ENCODE measurements at regions of chr2 and their contacts with region 1.

Region 1: DNA sequence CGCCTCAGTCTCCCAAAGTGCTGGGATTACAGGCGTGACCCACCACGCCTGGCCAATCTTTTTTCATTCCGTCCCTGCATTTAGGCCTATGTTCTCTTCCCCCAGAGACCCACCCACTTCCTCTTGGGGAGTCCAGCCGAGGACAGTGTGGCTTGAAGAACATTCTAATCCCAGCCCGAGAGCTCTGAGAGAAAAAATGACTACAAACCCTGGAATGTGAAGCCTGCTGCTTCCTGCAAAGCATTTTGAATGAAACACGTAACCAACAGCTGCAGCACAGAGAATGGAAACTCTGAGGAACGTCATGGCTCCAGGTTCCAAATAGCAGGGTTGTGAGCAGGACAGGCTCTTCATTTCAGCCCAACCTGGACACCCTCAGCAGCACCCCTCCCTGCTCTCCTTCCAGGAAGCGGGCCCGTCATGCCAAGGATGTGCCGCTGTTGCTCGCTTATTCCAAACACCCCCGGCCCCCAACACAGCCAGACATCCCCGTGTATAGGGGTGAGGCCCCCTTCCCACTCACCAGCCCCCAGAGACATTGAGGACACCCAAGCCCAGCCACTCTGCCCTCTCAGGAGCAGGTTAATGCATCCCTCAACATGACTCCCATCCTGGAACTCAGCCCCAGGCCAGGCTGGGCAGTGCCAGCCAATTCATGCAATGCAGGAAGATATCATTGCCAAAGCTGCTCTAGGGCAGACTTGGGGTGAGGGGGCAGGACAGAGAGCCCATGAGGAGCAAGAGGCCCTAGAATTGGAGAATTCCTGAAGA is 139.8 kb downstream of the ZFP36L2 start:
- DNase-seq: peak; percentile 80 to 96
- H3K4me3 ChIP-seq: no peak overlapping the region
- H3K27ac ChIP-seq: peak overlapping the region; percentile 96 to 97
- H3K4me1 ChIP-seq: peaks cover 33 to 63% of the 10 kb centered on the region in 2 donors
- H3K27me3 ChIP-seq: no peaks in the 10 kb centered on the region
- CTCF ChIP-seq: no peak

Region 2: GRCh38 chr2:42105330-42106256 is 981.0 kb before region 1 on chr2:
- intact Hi-C with region 1: no loop called
- DNase-seq: peak in 1 of 2 donors; percentile 80
- H3K4me3 ChIP-seq: no peak overlapping the region
- H3K27ac ChIP-seq: peak overlapping the region in 1 of 2 donors; percentile 12
- H3K4me1 ChIP-seq: peaks cover 0 to 28% of the 10 kb centered on the region in 2 donors
- H3K27me3 ChIP-seq: no peaks in the 10 kb centered on the region
- CTCF ChIP-seq: no peak

Region 3: GRCh38 chr2:42931146-42931817 is 155.4 kb before region 1 on chr2:
- intact Hi-C with region 1: no loop called
- DNase-seq: no peak
- H3K4me3 ChIP-seq: no peak overlapping the region
- H3K27ac ChIP-seq: peak overlapping the region; percentile 70 to 97
- H3K4me1 ChIP-seq: peaks cover 20 to 76% of the 10 kb centered on the region in 2 donors
- H3K27me3 ChIP-seq: no peaks in the 10 kb centered on the region
- CTCF ChIP-seq: peak in 2 of 3 experiments; percentile 21 to 26

Region 4: DNA sequence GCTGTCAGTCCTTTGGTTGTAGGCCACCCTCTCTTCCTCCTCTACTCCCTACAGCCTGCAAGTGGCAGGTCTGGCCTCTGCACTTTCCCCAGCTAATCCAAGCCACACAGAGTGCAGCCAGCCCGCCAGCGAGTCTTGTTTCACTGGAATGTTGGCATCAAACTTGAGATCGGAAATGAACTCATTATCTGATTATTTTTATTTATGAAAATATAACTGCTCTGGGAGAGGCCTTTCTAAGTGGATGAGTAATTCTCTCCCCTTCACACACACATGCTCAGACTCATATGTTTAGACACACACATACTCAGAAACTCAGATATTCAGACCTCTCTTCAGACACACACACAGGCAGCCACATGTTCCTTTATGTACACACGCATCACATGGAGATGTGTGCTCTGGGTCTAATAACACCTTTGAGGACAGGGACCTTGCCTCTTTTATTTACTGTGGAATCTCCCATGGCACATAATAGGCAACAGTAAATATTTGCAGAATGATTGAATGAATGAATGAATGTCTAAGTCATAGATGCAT is 11.5 kb before region 1 on chr2:
- intact Hi-C with region 1: loop called (anchors 1 kb)
- DNase-seq: peak; percentile 71 to 95
- H3K4me3 ChIP-seq: no peak overlapping the region
- H3K27ac ChIP-seq: peak overlapping the region; percentile 90 to 99
- H3K4me1 ChIP-seq: peaks cover 28 to 63% of the 10 kb centered on the region in 2 donors
- H3K27me3 ChIP-seq: no peaks in the 10 kb centered on the region
- CTCF ChIP-seq: peak in 2 of 3 experiments; percentile 12 to 25

Region 5: DNA sequence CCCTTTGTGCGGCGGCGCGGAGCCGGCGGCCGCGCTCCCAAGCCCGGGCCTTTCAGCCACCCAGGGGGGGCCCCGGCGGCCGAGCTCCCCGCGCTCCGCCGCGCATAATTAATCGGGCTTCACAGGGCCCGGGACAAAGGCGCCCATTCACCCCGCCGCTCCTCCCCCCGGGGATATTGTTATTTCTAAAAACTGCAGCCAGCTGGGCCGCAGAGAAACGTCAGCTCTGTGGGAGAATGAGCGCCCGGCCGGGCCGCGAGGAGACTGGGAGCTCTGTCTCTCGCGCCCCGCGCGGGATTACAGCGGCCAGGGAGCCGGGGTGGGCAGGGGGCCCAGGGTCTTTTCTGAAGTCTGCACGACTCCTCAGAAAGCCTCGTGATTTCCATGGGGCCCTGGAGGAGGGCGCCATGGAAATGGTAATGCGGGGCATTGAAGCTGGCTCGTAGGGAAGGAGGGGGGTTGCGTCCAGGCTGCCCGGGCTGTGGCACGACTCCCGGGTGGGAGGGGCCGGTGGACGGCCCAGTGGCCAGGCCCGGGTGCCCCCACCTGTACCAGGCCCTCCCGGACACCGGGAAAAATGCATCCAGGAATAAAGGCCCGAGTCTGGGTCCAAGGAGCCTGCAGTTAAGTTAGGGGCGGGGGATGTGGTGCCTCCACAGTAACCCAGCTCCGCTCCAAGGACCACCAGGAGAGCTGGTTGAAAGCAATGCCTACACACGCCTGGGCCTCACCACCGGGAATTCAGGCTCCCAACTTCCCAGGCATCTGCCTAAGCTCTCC is 14.4 kb after region 1 on chr2:
- intact Hi-C with region 1: loop called (anchors 2 kb)
- DNase-seq: no peak
- H3K4me3 ChIP-seq: peak overlapping the region; percentile 44 to 65
- H3K27ac ChIP-seq: peak overlapping the region; percentile 94 to 95
- H3K4me1 ChIP-seq: peaks cover 27 to 40% of the 10 kb centered on the region in 2 donors
- H3K27me3 ChIP-seq: no peaks in the 10 kb centered on the region
- CTCF ChIP-seq: no peak

Region 6: DNA sequence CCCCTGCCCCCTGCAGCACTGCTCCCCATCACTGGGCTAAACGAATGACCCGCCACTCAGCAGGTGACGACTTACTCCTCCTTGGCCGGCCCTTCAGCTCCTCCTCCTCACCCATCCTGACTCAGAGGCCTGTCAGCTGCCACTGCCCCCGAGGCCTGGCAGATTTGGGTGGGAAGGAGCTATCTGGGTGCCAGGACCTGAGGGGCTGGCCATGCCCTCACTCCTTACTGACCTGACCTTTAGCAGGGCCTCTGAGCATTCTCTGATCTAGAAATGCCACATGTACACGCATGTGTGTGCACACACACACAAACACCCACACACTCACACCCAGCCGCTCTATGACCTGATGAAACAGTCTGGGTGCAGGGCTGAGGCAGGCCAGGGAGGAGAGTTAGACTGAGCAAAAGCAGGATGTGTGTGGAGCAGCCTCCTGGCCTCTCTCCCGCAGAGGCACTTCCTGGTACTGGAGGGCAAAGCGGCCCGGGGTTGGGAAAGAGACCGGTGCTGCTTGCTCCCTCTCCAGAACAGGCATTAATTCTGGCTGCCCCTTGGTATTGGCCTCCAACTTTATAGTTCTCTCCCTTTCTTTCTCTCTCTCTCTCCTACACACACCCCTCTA is 71.7 kb after region 1 on chr2:
- intact Hi-C with region 1: loop called (anchors 1 kb)
- DNase-seq: peak; percentile 82 to 94
- H3K4me3 ChIP-seq: peak overlapping the region in 1 of 2 donors; percentile 5
- H3K27ac ChIP-seq: peak overlapping the region; percentile 93 to 95
- H3K4me1 ChIP-seq: peaks cover 22 to 31% of the 10 kb centered on the region in 2 donors
- H3K27me3 ChIP-seq: no peaks in the 10 kb centered on the region
- CTCF ChIP-seq: no peak

Region 7: DNA sequence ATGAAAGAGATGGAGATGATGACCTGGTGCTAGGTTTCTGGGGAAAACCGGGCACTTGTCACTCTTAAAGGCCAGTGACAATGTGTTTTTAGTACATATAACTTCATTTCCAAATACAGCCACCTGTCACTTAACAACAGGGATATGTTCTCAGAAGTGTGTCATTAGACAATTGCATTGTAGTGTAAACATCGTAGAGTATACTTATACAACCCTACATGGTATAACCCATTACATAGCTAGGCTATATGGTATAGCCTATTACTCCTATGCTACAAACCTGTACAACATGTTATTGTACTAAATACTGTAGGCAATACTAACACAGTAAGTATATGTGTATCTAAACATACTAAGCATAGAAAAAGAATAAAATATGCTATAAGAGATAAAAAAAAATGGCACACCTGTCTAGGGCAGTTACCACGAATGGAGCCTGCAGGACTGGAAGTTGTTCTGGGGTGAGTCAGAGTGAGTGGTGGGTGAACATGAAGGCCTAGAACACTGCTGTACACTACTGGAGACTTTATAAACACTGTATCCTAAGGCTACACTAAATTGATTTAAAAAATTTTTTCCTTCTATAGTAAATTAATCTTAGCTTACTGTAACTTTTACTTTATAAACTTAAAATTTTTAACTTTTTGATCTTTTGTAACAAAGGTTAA is 386.0 kb after region 1 on chr2:
- intact Hi-C with region 1: no loop called
- DNase-seq: no peak
- H3K4me3 ChIP-seq: no peak overlapping the region
- H3K27ac ChIP-seq: no peak overlapping the region
- H3K4me1 ChIP-seq: peaks cover 0 to 17% of the 10 kb centered on the region in 2 donors
- H3K27me3 ChIP-seq: no peaks in the 10 kb centered on the region
- CTCF ChIP-seq: no peak

Region 8: GRCh38 chr2:43818761-43819160 is 732.1 kb after region 1 on chr2:
- intact Hi-C with region 1: no loop called
- DNase-seq: no peak
- H3K4me3 ChIP-seq: no peak overlapping the region
- H3K27ac ChIP-seq: no peak overlapping the region
- H3K4me1 ChIP-seq: no peaks in the 10 kb centered on the region
- H3K27me3 ChIP-seq: no peaks in the 10 kb centered on the region
- CTCF ChIP-seq: no peak